Posterior cingulate gyrus (tissue), 11 donors: ENCODE measurements at regions of chr11 and their contacts with region 1.

Region 1: GRCh38 chr11:112961146-112961668 is at the start of gene NCAM1:
- DNase-seq: peak; percentile 90 to 99 (median 94)

Region 2: DNA sequence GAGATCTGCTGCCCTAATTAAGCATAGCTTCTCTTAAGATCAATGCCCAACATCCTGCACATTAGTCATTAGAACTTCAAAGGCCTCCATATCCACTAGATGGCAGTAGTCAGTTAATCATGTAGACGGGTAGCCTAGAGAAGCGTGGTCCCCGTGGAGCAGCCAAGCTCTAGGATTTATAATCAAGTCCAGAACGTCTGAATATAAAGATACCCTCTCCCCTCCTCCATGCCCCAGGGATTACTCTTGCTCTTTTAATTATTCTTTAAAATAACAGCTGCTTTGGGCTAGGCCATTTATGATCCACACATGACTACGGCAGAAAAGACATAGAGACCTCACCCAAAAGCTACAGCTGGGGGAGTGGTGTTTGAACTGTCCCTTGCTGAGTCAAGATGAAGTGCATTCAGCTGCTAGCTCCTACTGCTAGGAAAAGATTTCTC is 372.9 kb before region 1 on chr11:
- intact Hi-C with region 1: loop called (anchors 5 kb)
- DNase-seq: peak; percentile 42 to 94 (median 58)

Region 3: DNA sequence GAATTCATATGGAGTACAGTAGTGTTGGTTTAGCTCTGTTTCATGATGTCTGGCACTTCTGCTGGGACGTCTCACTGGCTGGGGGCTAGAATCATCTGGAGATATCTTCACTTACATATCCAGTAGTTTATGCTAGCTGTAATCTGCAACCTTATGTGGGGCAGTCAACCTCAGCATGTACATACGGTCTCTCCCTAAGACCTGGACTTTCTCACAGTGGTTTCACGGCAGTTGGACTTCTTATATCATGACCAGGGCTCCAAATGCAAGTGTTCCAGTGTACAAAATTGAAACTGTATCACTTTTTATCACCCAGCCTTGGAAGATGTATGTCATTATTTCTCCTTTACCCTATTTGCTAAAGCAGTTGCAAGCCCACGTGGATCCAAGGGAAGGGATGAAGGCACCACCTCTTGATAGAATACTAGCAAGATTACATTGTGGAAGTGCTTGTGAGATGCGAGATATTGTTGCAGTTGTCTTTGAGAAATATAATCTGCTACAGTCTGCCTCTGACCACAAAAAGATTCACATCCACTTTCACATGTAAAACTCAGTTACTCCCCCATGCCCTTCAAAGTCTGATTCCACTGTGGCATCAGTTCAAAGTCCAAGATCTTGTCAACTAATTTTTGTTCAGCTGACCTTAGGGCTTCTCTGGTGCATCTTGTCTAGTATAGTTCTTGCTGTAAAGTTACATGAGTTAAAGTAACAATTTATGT is 316.6 kb before region 1 on chr11:
- intact Hi-C with region 1: no loop called
- DNase-seq: no peak

Region 4: GRCh38 chr11:112655371-112655770 is 305.8 kb before region 1 on chr11:
- intact Hi-C with region 1: loop called (anchors 10 kb)
- DNase-seq: peak; percentile 41 to 95 (median 74)

Region 5: DNA sequence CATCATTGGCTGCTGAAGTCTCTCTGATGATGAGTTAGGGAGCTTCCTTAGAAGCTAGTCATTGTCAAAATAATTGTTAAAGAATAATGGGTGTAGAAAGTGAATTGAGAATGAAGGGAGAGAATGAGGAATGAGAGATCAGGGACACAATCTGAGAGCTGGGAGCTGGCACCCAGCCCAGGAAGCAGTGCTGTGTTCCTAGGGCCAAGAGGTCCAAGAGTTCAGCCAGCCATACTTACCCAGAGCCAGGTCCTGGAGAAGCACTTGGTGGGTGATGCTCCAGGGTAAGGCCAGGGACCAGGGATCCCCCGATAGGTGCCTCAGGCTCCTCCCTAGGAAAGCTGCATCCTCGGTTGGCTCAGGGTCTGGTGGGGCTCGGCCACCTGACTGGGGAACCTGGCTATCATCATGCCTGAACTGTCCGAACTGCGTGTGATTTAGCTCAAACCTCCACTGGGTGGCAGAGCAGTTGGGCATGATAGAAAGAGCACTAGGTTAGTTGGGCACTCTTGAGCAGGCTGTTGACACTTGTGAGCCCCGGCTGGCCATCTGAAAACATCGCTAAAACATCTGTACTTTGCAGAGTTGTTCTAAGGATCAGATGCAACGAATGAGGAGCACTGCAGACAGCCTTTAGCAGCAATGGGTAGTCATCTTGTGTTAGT is 123.9 kb before region 1 on chr11:
- intact Hi-C with region 1: loop called (anchors 2 kb)
- DNase-seq: peak in 7 of 10 donors; percentile 45 to 93 (median 68)

Region 6: GRCh38 chr11:113082341-113082955 is 121.2 kb after region 1 on chr11:
- intact Hi-C with region 1: no loop called
- DNase-seq: no peak

Region 7: GRCh38 chr11:113113801-113114706 is 152.8 kb after region 1 on chr11:
- intact Hi-C with region 1: loop called (anchors 5 kb)
- DNase-seq: peak; percentile 61 to 97 (median 78)

Region 8: DNA sequence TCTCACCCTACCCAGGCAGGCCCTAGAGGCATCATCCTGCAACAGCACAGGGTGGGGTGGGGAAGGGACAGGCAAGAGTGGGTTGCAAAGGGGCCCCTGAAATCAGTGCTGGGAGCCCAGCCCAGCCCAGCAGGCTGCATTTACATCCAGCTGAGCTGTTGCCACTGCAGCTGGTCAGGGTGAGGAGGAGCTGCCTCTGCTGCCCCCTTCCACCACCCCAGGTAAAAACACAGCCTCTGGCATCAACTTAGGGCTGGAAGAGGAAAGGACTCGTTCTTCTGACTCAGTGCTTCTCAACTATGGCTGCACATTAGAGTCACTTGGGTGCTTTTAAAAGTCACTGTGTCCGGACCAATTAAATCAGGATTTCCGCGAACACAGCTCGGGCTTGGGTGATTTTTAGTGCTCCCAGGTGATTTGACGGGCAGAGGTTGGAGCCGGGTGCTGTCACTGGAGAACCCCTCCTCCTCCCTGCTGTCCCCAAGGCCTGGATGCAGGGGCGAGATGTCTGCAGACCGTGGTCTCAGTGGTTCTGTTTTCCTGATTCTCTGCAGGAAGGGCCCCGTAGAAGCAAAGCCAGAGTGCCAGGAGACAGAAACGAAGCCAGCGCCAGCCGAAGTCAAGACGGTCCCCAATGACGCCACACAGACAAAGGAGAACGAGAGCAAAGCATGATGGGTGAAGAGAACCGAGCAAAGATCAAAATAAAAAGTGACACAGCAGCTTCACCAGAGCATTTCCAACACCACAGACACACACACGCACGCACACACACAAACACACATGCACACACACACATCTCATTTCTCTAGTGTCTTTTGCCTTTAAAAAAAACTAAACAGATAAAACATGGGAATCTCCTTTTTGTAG is 313.7 kb after region 1 on chr11:
- intact Hi-C with region 1: loop called (anchors 10 kb)
- DNase-seq: peak in 5 of 10 donors; percentile 41 to 92 (median 49)